A673 (cell line): ENCODE measurements at regions of chr1 and their contacts with region 1.

Region 1: DNA sequence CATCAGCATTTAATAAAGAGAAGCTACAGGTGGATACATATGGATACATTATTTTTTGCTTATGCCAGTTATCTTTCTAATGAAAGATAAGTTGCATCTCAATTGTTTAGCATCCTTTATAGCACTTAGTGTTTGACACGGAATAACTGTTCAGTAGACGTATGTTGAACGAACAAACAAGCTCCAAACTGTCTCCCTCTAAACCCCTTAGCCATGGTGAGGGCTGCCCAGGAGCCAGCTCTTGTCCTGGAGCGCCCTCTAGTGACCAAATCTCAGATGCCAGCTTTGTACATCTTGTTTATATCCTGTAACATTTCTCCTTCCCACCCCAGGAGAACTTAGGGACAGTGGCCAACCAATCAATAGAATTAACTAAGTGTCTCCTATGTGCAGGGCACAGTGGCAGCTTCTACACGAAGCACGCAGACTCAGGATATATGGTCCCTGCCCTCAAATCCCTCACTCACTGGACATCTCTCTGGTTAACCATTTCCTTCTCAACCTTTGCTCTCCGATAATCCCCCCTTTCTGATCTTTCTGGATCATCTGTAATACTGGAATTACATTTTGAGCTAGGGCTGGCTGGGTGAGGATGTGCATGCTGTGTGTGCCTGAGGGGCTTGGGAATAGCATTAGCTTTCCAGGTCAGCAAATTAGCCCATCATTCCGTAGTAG is 22.9 kb downstream of the KCNA10 start:
- DNase-seq: peak; percentile 83
- H3K4me3 ChIP-seq: no peak overlapping the region
- H3K27ac ChIP-seq: no peak overlapping the region
- H3K4me1 ChIP-seq: peaks cover 10% of the 10 kb centered on the region
- H3K27me3 ChIP-seq: no peaks in the 10 kb centered on the region
- CTCF ChIP-seq: peak; percentile 94

Region 2: GRCh38 chr1:109643385-109644230 is 852.5 kb before region 1 on chr1:
- CTCF ChIA-PET with region 1: no interaction called
- POLR2A ChIA-PET with region 1: no interaction called
- intact Hi-C with region 1: no loop called
- DNase-seq: peak; percentile 85
- H3K4me3 ChIP-seq: no peak overlapping the region
- H3K27ac ChIP-seq: peak overlapping the region; percentile 40
- H3K4me1 ChIP-seq: peaks cover 14% of the 10 kb centered on the region
- H3K27me3 ChIP-seq: no peaks in the 10 kb centered on the region
- CTCF ChIP-seq: peak; percentile 94

Region 3: DNA sequence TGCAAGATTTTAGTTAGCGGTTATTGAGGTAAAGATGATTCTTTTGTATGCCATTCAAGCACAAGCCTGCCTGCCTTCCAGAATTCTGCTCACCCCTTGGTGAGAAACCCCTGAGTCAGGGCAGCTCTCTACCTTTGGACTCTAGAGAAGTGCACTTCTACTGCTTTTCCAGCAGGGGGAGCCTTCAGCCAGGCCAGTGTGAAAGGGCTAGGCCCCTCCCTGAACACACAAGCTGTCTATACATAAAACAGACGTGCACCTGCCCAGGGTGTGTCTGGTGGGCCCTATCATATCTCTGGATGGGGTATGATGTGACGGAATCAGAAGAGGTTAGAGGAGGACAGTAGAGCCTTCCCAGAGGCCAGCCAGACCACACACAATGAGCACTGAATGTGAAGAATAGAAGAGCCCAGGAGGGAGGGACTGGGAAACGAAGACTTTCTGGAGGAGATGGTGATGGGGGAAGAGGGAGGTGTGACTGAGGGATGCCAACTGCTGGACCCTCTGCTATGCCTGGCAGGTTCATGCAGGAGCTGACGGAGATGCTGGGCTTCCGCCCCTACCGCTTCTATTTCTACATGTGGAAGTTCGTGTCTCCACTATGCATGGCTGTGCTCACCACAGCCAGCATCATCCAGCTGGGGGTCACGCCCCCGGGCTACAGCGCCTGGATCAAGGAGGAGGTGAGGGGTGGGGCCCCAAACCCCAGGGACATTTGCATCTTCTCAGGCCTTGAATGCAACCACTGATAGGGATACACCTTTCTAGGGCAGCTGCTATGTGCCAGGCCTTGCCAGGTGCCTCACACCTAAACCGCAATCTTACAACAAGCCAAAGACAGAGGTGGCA is 298.9 kb before region 1 on chr1:
- CTCF ChIA-PET with region 1: interaction called, 11 read pairs
- POLR2A ChIA-PET with region 1: no interaction called
- intact Hi-C with region 1: loop called (anchors 2 kb)
- DNase-seq: peak; percentile 55
- H3K4me3 ChIP-seq: no peak overlapping the region
- H3K27ac ChIP-seq: no peak overlapping the region
- H3K4me1 ChIP-seq: peaks cover 7% of the 10 kb centered on the region
- H3K27me3 ChIP-seq: no peaks in the 10 kb centered on the region
- CTCF ChIP-seq: peak; percentile 93

Region 4: GRCh38 chr1:110209715-110210603 is 286.1 kb before region 1 on chr1 and contains the start of gene KCNC4:
- CTCF ChIA-PET with region 1: interaction called, 34 read pairs
- POLR2A ChIA-PET with region 1: no interaction called
- intact Hi-C with region 1: loop called (anchors 1 kb)
- DNase-seq: peak; percentile 79
- H3K4me3 ChIP-seq: peak within 1 kb of the TSS; percentile 52
- H3K27ac ChIP-seq: no peak within 1 kb of the TSS
- H3K4me1 ChIP-seq: peaks cover 14% of the 10 kb centered on the region
- H3K27me3 ChIP-seq: peaks cover 42% of the 10 kb centered on the region
- CTCF ChIP-seq: no peak
- total RNA-seq, gene KCNC4: 0.22 and 0.24 TPM in 2 replicates

Region 5: GRCh38 chr1:110412576-110412975 is 83.5 kb before region 1 on chr1:
- CTCF ChIA-PET with region 1: interaction called, 9 read pairs
- POLR2A ChIA-PET with region 1: no interaction called
- intact Hi-C with region 1: loop called (anchors 2 kb)
- DNase-seq: peak; percentile 77
- H3K4me3 ChIP-seq: no peak overlapping the region
- H3K27ac ChIP-seq: no peak overlapping the region
- H3K4me1 ChIP-seq: peaks cover 7% of the 10 kb centered on the region
- H3K27me3 ChIP-seq: peaks cover 21% of the 10 kb centered on the region
- CTCF ChIP-seq: peak; percentile 77

Region 6: DNA sequence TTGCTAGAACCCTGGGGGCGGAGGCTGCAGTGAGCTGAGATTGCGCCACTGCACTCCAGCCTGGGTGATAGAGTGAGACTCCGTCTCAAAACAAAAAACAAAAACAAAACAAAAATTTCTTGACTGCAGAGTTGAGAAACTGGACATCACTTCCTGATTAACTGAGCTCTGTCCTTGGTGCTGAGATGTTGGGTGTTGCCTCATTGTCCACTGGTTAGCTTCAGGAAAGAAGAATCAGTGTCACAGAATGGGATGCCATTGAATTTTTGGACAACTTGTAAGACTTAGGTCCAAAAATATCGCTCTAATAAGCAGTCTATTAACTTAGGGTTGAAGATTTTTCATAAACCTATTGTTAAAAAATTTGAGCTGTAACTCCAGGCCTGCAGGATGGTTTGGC is 46.7 kb after region 1 on chr1:
- CTCF ChIA-PET with region 1: no interaction called
- POLR2A ChIA-PET with region 1: no interaction called
- intact Hi-C with region 1: no loop called
- DNase-seq: peak; percentile 67
- H3K4me3 ChIP-seq: no peak overlapping the region
- H3K27ac ChIP-seq: no peak overlapping the region
- H3K4me1 ChIP-seq: peaks cover 8% of the 10 kb centered on the region
- H3K27me3 ChIP-seq: no peaks in the 10 kb centered on the region
- CTCF ChIP-seq: no peak